ENCODE measurements at regions of chr10 and their contacts with region 1.

Region 1: DNA sequence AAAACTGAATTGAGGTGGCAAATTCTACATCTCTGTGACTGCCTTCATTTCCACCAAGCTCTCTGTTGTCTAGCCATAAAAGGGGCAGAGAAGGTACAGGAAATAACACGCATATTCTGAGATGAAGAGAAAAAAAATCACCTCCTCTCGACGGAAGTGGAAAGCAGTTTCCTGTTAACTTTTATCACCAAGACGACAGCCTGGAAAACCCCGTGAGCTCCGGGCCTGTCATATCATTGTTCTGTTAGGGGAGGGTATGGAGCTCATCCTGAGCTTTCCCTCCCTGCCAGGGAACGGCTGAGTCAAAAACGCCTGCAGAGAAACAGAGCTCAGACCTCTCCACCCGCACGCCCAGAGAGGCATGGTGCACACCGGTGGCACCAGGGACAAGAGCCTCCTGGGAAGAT is 200.3 kb downstream of the PRPF18 start:
- DNase-seq: peak in 2 of 3 donors; percentile 44 to 58
- ATAC-seq: peak; percentile 63 to 69 (median 66)
- H3K4me3 ChIP-seq: no peak overlapping the region
- H3K27ac ChIP-seq: peak overlapping the region; percentile 20 to 56 (median 35)
- H3K4me1 ChIP-seq: no peaks in the 10 kb centered on the region
- H3K27me3 ChIP-seq: no peaks in the 10 kb centered on the region
- CTCF ChIP-seq: no peak
- POLR2A ChIP-seq: no peak

Region 2: GRCh38 chr10:13206546-13207443 is 580.2 kb before region 1 on chr10:
- intact Hi-C with region 1: no loop called
- DNase-seq: no peak
- ATAC-seq: no peak
- H3K4me3 ChIP-seq: no peak overlapping the region
- H3K27ac ChIP-seq: no peak overlapping the region
- H3K4me1 ChIP-seq: no peaks in the 10 kb centered on the region
- H3K27me3 ChIP-seq: no peaks in the 10 kb centered on the region
- CTCF ChIP-seq: peak; percentile 30 to 68 (median 58)
- POLR2A ChIP-seq: no peak

Region 3: GRCh38 chr10:13847201-13847631 is 60.2 kb after region 1 on chr10:
- intact Hi-C with region 1: no loop called
- DNase-seq: no peak
- ATAC-seq: peak in 2 of 4 donors; percentile 22 to 31
- H3K4me3 ChIP-seq: no peak overlapping the region
- H3K27ac ChIP-seq: no peak overlapping the region
- H3K4me1 ChIP-seq: peaks cover 0 to 5% (median 0%) of the 10 kb centered on the region in 4 donors
- H3K27me3 ChIP-seq: no peaks in the 10 kb centered on the region
- CTCF ChIP-seq: no peak
- POLR2A ChIP-seq: no peak

Region 4: DNA sequence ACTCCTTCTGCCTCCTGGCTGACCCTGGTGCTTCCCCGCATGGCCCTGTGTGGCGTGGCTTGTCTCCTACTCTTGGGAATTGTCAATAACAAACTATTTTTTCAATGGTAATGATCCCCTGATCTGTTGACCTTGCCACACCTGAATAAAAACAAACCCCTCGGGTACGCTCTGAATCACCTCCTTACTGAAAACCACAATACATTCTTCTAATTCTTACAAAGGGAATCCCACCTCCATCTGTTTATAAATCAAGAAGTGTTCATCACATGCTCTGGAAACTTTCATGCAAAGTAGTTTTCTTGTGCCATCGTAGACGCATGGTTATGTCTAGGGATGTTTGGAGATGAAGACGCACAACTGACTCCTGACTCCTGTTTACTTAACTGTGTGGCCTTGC is 297.9 kb after region 1 on chr10:
- intact Hi-C with region 1: loop called (anchors 5 kb)
- DNase-seq: no peak
- ATAC-seq: no peak
- H3K4me3 ChIP-seq: no peak overlapping the region
- H3K27ac ChIP-seq: no peak overlapping the region
- H3K4me1 ChIP-seq: no peaks in the 10 kb centered on the region
- H3K27me3 ChIP-seq: no peaks in the 10 kb centered on the region
- CTCF ChIP-seq: no peak
- POLR2A ChIP-seq: no peak

Region 5: DNA sequence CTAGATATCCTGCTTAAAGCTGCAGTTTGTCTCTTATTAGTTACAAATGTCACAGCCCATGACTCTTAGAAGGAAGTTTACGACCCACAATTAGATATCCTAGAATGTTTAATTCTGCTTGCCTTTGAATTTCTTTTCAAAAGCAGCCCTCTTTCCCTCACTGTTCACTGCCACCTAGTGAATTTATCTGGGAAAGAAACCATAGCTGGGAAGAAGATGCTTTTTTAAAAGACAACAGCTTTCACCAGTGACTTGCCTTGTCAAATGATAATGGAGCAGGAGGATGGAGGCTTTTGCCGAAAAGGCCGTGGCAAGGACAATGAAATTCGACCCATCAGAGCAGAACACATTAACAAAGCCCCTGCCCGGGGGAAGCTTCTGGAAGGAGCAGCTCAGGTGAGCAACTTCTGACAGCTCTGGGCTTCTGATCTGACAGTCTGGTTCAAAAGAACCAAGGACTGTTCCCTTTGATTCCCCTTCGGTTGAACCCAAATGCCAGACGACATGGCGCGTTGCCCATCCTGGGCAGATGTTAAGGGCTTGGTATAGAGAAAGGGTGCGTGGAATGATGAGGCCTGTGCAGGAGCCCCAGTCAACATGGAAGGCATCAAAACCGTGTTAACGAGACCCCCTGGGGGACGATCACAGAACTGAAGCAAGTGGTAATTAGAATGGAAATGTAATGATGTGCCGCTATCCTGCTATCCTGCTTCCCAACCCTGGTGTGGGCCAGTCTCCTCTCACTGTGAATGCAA is 306.9 kb after region 1 on chr10:
- intact Hi-C with region 1: loop called (anchors 5 kb)
- DNase-seq: no peak
- ATAC-seq: peak; percentile 65 to 84 (median 72)
- H3K4me3 ChIP-seq: no peak overlapping the region
- H3K27ac ChIP-seq: no peak overlapping the region
- H3K4me1 ChIP-seq: no peaks in the 10 kb centered on the region
- H3K27me3 ChIP-seq: no peaks in the 10 kb centered on the region
- CTCF ChIP-seq: peak; percentile 47 to 65 (median 52)
- POLR2A ChIP-seq: no peak